Activated T-helper 2 cell treated with anti-CD3 and anti-CD28 coated beads, Interferon-gamma antibody, Interleukin-2, Interleukin-4, amounts not matched to agents 10 μg/mL and 5 μg/mL and 100 μg/mL, durations not matched to agents 14 hours and 24 hours and 36 hours (primary cell): ENCODE measurements at regions of chr10 and their contacts with region 1.

Region 1: DNA sequence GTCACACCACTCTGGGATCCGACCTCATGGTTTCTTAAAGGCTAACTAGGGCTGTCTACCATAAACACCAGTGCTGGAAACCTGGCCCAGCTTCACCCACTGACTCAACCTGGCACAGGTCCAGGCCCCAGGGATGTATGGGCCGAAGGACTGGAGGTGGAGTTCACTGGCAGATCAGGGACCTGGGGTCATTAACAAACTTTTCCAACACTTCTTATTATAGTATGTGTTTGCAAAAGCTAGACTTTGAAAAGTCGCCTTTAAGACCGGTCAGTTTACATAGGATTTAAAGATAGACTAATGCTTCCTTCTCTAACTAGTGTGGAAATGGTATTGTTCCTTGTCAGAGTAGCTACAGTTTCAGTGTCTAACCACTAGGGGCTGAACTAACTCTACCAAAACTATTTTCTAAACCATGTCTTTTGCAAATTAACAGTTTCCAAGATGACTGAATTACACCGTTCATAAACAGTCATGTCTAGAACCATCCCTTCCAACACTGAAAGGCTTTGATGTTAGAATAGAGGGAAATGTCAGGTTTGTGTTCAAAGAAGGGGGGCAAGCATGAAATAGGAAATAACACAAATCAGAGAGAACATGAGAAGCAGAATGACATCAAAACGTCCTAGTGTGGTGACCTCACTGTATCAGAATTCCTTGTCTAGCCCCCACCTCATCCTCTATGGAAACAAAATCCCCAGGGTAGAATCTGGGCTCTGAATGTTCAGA is 29.7 kb downstream of the STN1 start:
- DNase-seq: no peak
- H3K4me3 Mint-ChIP-seq: no peak overlapping the region
- H3K27ac Mint-ChIP-seq: peak overlapping the region; percentile 57
- H3K4me1 Mint-ChIP-seq: peaks cover 38% of the 10 kb centered on the region
- H3K27me3 Mint-ChIP-seq: no peaks in the 10 kb centered on the region

Region 2: DNA sequence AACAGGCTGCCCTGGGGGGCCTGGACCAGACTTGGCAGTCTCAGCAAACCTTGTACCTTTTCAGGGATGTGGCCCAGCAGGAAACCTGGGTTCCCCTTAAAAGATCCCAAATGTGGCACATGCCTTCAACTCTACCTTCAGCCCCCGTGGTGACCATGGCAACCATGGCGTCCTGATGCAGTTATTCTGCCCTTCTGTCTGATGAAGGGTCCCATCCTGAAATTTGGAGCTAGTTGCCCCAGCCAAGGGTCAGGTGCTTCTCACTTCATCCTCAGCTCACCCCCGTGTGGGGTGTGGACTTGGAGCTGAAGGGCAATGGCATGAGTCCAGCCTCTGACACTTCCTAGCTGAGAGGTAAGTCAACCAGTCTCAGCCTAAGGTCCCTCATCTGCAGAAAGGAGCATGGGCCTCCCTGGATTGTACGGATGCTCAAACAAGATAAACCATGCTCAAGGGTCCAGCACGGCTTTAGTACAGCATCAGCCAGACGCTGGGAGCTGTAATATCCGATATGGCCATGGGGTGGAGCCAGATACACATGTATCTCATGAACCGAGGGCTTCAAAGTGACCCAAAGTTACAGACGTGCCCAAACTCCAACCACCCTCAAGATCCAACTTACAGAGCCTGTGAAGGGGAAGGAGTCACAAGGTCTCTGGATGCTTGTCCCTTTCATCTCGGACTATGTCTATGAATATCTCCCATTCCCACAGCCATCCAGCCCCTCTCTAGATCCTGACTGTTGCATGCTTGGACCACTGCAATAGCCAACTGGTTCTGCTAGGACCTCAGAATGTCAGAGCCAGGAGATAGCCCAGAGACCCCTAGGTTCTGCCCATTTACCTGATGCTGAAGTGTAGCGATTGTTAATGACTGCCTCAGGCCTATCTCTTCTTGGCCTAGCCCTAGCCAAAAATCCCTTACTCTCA is 175.4 kb before region 1 on chr10:
- intact Hi-C with region 1: loop called (anchors 1 kb)
- DNase-seq: peak; percentile 69
- H3K4me3 Mint-ChIP-seq: no peak overlapping the region
- H3K27ac Mint-ChIP-seq: no peak overlapping the region
- H3K4me1 Mint-ChIP-seq: peaks cover 9% of the 10 kb centered on the region
- H3K27me3 Mint-ChIP-seq: no peaks in the 10 kb centered on the region

Region 3: DNA sequence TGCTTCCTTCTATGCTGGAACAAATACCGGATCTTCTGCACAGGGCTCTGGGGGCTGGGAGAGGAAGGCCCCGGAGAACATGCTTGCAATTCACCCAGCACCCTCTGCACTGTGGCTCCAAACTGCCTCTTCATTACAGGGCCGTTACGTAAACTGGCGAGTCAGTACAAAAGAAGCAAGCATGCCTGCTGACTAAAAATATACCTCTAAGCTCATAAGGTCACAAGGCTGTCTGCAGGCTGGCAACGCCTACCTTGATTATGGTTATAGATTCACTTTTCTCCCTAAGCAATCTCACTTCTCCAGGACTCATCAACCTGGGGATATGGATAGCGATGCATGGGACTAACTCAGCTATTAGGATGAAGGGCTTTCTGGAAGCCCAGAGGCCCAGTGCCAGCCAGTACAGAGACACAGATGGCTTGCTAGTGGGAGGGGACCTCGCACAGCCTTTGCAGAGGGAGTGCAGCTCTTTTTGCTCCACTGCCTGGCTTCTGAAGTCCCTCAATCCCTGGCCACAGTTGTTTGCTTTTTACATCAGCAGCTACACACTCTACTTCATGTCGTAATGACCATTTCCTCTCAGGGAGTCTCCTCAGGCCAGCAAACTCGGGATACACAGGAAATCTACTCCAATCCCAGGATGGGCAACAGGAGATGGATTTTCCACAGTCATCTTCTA is 129.0 kb before region 1 on chr10:
- intact Hi-C with region 1: no loop called
- DNase-seq: peak; percentile 37
- H3K4me3 Mint-ChIP-seq: peak overlapping the region; percentile 27
- H3K27ac Mint-ChIP-seq: peak overlapping the region; percentile 78
- H3K4me1 Mint-ChIP-seq: peaks cover 56% of the 10 kb centered on the region
- H3K27me3 Mint-ChIP-seq: peaks cover 14% of the 10 kb centered on the region

Region 4: GRCh38 chr10:103918053-103918846 is 30.0 kb after region 1 on chr10 and contains the start of gene STN1:
- intact Hi-C with region 1: loop called (anchors 1 kb)
- DNase-seq: peak; percentile 95
- H3K4me3 Mint-ChIP-seq: peak within 1 kb of the TSS; percentile 86
- H3K27ac Mint-ChIP-seq: peak within 1 kb of the TSS; percentile 96
- H3K4me1 Mint-ChIP-seq: peaks cover 31% of the 10 kb centered on the region
- H3K27me3 Mint-ChIP-seq: no peaks in the 10 kb centered on the region
- total RNA-seq, gene STN1: 21.7 and 25.1 TPM in 2 replicates

Region 5: DNA sequence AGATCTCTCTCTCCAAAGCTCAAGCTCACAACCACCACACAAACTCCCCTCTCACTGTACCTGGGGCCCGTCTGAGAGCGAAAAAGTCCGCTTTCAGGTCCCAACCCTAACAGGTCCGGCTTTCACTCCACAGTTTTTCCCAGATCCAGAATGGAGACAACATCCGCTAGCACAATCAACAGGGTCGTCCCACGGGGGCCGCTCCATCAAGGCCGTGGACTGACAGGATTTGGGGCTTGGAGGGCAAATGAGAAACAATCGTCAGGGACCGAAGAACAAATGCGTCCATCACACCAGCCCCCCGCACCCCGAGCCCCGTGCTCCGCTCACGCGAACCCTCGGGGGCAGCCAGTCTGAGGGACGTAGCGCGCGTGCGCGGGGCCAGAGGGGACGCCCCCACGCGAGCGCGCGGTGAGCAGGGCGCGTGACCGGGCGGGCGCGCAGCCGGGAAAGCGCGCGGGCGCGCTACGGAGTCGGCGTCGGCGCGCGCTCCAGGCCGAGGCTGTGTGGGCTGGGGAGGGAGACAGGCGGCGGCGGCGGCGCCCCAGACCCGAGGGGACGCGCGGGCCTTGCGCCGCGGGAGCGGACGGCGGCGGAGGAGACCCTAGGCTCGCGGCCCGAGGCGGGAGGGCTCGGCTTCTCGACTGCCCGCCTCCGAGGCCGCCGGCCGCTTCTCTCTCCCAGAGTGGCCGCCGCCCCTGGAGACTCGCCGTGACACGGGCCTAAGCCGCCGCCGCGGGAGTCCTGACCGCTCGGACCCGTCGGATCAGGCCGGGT is 78.6 kb after region 1 on chr10 and contains the start of gene SLK:
- intact Hi-C with region 1: loop called (anchors 2 kb)
- DNase-seq: peak; percentile 81
- H3K4me3 Mint-ChIP-seq: peak within 1 kb of the TSS; percentile 94
- H3K27ac Mint-ChIP-seq: peak within 1 kb of the TSS; percentile 95
- H3K4me1 Mint-ChIP-seq: peaks cover 28% of the 10 kb centered on the region
- H3K27me3 Mint-ChIP-seq: no peaks in the 10 kb centered on the region
- total RNA-seq, gene SLK: 25.2 and 26.7 TPM in 2 replicates

Region 6: GRCh38 chr10:104028146-104028545 is 139.9 kb after region 1 on chr10:
- intact Hi-C with region 1: loop called (anchors 5 kb)
- DNase-seq: no peak
- H3K4me3 Mint-ChIP-seq: no peak overlapping the region
- H3K27ac Mint-ChIP-seq: no peak overlapping the region
- H3K4me1 Mint-ChIP-seq: peaks cover 3% of the 10 kb centered on the region
- H3K27me3 Mint-ChIP-seq: no peaks in the 10 kb centered on the region

Region 7: DNA sequence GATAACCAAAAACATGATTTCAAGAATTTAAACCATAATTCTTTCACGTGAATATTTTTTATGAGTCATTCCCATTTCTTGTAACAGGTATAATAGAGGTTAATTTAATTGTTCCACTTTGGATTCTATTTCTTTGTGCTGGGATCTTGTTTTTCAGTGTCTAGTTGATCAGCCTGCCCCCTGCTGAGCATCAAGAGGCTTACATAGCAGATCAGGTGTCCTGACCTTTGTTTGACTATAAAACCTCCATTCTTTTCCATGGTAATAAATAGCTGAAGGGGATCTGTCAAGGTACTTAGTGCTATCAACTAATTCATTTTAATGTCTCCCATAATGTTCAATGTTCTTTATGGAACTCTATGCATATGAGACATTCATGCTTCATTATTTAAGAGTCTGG is 192.5 kb after region 1 on chr10:
- intact Hi-C with region 1: loop called (anchors 2 kb)
- DNase-seq: no peak
- H3K4me3 Mint-ChIP-seq: no peak overlapping the region
- H3K27ac Mint-ChIP-seq: no peak overlapping the region
- H3K4me1 Mint-ChIP-seq: no peaks in the 10 kb centered on the region
- H3K27me3 Mint-ChIP-seq: peaks cover 11% of the 10 kb centered on the region

Region 8: GRCh38 chr10:104209575-104210198 is 321.4 kb after region 1 on chr10:
- intact Hi-C with region 1: loop called (anchors 1 kb)
- DNase-seq: no peak
- H3K4me3 Mint-ChIP-seq: no peak overlapping the region
- H3K27ac Mint-ChIP-seq: no peak overlapping the region
- H3K4me1 Mint-ChIP-seq: no peaks in the 10 kb centered on the region
- H3K27me3 Mint-ChIP-seq: peaks cover 42% of the 10 kb centered on the region